Ascending aorta (tissue), 2 donors: ENCODE measurements at regions of chr7 and their contacts with region 1.

Region 1: GRCh38 chr7:38938001-38938485 is 29.1 kb upstream of the VPS41 start:
- DNase-seq: no peak
- H3K4me3 ChIP-seq: no peak overlapping the region
- H3K27ac ChIP-seq: peak overlapping the region; percentile 74
- H3K4me1 ChIP-seq: peaks cover 0 to 23% of the 10 kb centered on the region in 2 donors
- H3K27me3 ChIP-seq: no peaks in the 10 kb centered on the region
- CTCF ChIP-seq: no peak

Region 2: GRCh38 chr7:38840736-38841460 is 97.1 kb before region 1 on chr7:
- intact Hi-C with region 1: no loop called
- DNase-seq: no peak
- H3K4me3 ChIP-seq: no peak overlapping the region
- H3K27ac ChIP-seq: no peak overlapping the region
- H3K4me1 ChIP-seq: peaks cover 0 to 7% of the 10 kb centered on the region in 2 donors
- H3K27me3 ChIP-seq: no peaks in the 10 kb centered on the region
- CTCF ChIP-seq: no peak

Region 3: DNA sequence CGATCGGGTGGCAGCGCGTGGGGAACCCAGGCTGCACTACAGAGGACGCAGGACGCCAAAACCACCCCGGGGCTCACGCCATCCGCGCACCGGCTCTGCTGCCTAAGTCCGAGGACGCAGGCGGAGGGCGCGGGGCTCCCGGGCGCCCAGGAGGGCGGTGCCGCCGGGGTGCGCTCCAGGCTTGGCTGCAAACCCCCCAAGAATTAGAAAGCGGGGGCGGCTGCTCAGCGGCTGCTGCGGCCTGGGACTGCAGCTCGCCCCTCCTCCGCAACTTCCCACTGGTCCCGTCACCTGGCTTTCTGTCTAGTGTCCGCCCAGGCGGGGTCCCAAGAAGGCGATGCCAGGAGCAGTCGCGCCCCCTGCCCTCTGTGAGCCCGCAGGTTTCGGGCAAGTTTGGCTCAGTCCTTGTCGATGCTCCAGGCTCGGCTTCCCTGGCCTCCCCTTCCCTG is 37.9 kb after region 1 on chr7:
- intact Hi-C with region 1: loop called (anchors 5 kb)
- DNase-seq: no peak
- H3K4me3 ChIP-seq: peak overlapping the region; percentile 51 to 77
- H3K27ac ChIP-seq: peak overlapping the region in 1 of 2 donors; percentile 26
- H3K4me1 ChIP-seq: peaks cover 2 to 4% of the 10 kb centered on the region in 2 donors
- H3K27me3 ChIP-seq: no peaks in the 10 kb centered on the region
- CTCF ChIP-seq: peak in 1 of 3 experiments; percentile 4

Region 4: GRCh38 chr7:39085590-39086049 is 147.6 kb after region 1 on chr7:
- intact Hi-C with region 1: loop called (anchors 5 kb)
- DNase-seq: no peak
- H3K4me3 ChIP-seq: peak overlapping the region in 1 of 2 donors; percentile 59
- H3K27ac ChIP-seq: no peak overlapping the region
- H3K4me1 ChIP-seq: no peaks in the 10 kb centered on the region
- H3K27me3 ChIP-seq: no peaks in the 10 kb centered on the region
- CTCF ChIP-seq: no peak